Activated B cell treated with CpG ODN at 0.5 μM for 24 hours (primary cell): ENCODE measurements at regions of chr5 and their contacts with region 1.

Region 1: DNA sequence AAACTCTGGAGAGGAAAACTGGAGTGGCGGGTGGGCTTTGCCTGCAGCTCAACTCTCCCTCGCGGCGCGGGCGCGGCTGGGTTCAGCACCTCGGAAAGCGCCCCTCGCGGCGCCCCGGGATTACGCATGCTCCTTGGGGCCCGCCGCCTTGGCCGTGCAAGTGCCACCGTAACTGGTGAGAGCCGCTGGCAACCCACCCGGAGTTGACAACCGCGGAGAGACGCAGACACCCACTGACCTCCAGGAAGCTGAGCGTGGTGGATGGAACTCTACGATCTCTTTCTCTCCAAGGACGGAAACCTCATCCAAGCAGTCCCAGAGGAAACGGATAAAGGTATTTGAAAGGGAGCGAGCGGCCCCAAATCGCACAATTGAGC is 194 bp upstream of the RXFP3 start:
- DNase-seq: peak; percentile 31
- ATAC-seq: no peak
- H3K4me3 Mint-ChIP-seq: no peak overlapping the region
- H3K27ac Mint-ChIP-seq: no peak overlapping the region
- H3K4me1 Mint-ChIP-seq: peaks cover 17% of the 10 kb centered on the region
- H3K27me3 Mint-ChIP-seq: peaks cover 43% of the 10 kb centered on the region
- CTCF ChIP-seq: no peak

Region 2: DNA sequence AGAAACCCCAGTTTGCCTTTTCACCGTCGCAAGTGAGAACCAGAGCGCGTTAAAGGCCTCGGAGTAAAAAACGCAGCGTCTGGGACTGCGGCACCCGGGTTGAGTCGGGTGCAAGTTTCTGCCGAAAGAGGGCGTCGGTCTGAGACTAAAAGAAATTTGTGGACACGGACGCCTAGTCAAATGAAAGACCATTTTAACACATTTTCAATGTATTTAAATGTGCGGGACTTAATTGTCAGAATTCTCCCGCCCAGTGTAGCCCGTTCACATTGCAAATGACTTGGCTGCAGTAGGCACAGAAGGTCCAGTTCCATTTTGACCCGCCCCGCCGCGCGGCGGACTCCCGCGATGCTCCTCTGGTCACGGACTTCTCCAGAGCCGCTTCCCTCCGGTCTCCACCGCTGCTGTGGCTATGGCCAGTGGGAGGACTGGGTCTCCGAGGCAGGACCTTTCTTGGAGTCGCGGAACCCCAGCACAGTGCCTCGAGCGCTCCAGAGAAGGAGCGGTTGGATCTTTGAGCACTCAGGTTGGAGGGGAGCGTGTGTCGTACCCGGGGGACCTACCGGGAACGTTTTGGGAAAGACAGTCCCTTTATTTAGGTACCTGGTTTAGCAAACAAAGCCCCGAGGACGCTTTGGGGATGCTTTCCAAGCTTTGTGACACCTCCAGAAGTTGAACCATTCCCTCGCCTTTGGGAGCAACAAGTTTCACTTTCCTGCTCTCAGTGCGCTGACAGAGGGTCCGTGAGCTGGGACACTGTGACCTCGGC is 1226.0 kb before region 1 on chr5:
- CTCF ChIA-PET with region 1: no interaction called
- POLR2A ChIA-PET with region 1: no interaction called
- intact Hi-C with region 1: loop called (anchors 5 kb)
- DNase-seq: no peak
- ATAC-seq: no peak
- H3K4me3 Mint-ChIP-seq: peak overlapping the region; percentile 78
- H3K27ac Mint-ChIP-seq: no peak overlapping the region
- H3K4me1 Mint-ChIP-seq: peaks cover 35% of the 10 kb centered on the region
- H3K27me3 Mint-ChIP-seq: peaks cover 45% of the 10 kb centered on the region
- CTCF ChIP-seq: no peak

Region 3: DNA sequence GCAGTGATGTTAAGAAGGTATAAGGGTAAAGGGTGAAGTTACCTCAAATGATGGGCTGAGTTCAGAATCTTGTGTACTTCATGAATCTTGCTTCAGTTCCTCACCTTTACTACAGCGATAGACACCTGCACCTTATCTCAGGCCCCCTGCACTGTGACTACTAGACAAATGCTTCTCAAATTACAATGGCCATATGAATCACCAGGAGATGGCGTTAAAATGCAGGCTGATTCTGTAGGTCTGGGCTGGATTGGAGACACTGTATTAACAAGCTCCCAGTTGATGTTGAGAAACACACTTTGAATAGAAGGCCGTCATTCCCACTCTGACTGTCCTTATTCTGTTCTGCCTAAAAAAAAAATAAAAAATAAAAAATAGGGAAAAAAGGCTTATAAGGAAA is 465.4 kb before region 1 on chr5:
- CTCF ChIA-PET with region 1: interaction called, 8 read pairs
- POLR2A ChIA-PET with region 1: no interaction called
- intact Hi-C with region 1: loop called (anchors 1 kb)
- DNase-seq: no peak
- ATAC-seq: no peak
- H3K4me3 Mint-ChIP-seq: no peak overlapping the region
- H3K27ac Mint-ChIP-seq: no peak overlapping the region
- H3K4me1 Mint-ChIP-seq: peaks cover 5% of the 10 kb centered on the region
- H3K27me3 Mint-ChIP-seq: no peaks in the 10 kb centered on the region
- CTCF ChIP-seq: no peak

Region 4: GRCh38 chr5:33588654-33589372 is 347.2 kb before region 1 on chr5:
- CTCF ChIA-PET with region 1: interaction called, 24 read pairs
- POLR2A ChIA-PET with region 1: no interaction called
- intact Hi-C with region 1: loop called (anchors 1 kb)
- DNase-seq: no peak
- ATAC-seq: no peak
- H3K4me3 Mint-ChIP-seq: no peak overlapping the region
- H3K27ac Mint-ChIP-seq: no peak overlapping the region
- H3K4me1 Mint-ChIP-seq: no peaks in the 10 kb centered on the region
- H3K27me3 Mint-ChIP-seq: no peaks in the 10 kb centered on the region
- CTCF ChIP-seq: no peak

Region 5: DNA sequence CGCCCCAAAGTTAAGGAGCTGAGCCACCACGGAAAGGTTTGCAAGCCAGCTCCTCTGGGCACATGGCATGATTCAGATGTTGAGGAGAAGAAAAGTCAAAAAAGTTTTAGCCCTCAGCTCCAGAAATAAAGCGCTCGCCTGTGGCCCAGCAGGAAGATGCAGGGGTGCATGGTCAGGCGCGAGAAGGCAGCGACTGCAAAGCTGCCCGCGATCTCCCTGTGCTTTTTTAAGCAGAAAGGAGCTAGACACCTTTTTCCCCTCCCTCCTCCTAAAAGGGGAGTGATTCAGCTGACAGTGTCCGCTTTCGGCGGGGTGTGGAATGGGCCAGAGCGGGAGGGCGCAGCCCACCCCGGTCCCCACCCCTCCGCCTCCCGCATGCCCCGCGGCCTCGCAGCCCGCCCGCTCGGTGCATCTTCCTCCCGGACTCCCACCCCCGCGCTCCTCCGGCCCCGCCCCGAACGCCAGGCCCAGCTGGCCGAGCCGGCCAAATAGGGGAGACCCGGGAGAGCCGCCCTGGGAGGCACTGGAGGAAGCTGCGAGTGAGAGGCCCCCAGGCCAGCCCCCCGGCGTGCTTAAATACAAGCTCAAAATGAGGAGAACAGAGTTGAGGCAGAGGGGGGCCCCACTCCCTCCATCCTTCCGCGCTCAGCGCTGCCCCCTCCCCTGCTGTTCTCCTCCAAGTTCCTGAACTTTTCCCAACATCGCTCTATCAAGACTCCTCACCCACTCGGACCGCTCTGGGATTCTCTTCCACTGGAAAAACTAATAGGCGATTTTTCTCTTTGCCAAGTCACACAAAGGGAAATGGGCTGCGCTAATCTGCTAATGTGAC is 44.0 kb before region 1 on chr5 and contains the start of gene ADAMTS12:
- CTCF ChIA-PET with region 1: no interaction called
- POLR2A ChIA-PET with region 1: no interaction called
- intact Hi-C with region 1: no loop called
- DNase-seq: no peak
- ATAC-seq: no peak
- H3K4me3 Mint-ChIP-seq: no peak within 1 kb of the TSS
- H3K27ac Mint-ChIP-seq: no peak within 1 kb of the TSS
- H3K4me1 Mint-ChIP-seq: peaks cover 5% of the 10 kb centered on the region
- H3K27me3 Mint-ChIP-seq: peaks cover 52% of the 10 kb centered on the region
- CTCF ChIP-seq: no peak
- total RNA-seq, gene ADAMTS12: not detected in 2 replicates

Region 6: DNA sequence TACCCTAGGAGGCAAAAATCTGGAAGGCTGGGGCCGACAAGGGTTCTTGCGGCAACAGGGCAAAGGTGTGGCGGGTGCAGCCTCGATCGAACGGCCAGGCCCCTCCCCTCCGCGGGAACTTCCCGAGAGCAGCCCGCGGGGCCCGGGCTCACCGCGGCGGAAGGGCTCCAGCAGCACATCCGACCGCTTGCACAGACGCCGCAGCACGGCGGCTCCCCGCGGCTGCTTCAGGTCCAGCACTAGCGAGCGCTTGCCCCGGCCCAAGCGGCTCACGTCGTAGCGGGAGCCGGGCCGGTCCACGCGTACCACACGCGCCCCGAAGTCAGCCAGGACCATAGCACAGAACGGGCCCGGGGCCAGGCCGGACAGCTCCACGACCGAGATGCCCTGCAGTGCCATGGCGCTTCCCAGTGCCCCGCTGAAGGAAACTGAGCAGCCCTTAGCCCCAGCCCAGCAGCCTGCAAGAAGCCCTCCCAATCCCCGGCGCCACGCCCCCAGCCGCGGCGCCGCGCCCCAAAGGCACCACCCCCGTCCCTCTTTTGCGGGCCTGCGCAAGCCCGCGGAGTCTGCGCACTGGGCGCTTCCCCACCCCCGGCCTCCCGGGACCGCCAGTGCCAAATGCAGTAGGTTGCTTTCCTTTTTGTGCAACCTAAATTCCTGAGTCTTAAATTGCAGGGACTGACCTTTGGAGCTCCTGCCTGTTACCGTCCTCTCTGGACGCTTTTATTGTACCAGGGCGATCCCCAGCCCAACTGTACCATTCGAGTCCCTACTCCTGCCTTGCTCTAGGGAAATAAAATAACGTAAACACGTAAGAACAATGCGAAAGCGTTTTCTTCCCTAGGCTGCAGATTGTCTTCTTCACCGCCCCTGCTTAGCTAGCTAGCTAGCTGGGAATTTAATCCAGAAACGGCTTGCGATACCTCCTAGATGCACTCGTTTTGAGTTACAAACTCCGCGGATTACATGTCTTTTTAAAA is 71.9 kb after region 1 on chr5 and contains the start of gene AMACR:
- CTCF ChIA-PET with region 1: no interaction called
- POLR2A ChIA-PET with region 1: no interaction called
- intact Hi-C with region 1: loop called (anchors 2 kb)
- DNase-seq: peak; percentile 90
- ATAC-seq: peak; percentile 92
- H3K4me3 Mint-ChIP-seq: peak within 1 kb of the TSS; percentile 95
- H3K27ac Mint-ChIP-seq: peak within 1 kb of the TSS; percentile 91
- H3K4me1 Mint-ChIP-seq: peaks cover 23% of the 10 kb centered on the region
- H3K27me3 Mint-ChIP-seq: no peaks in the 10 kb centered on the region
- CTCF ChIP-seq: no peak
- total RNA-seq, gene AMACR: 6.0 and 6.5 TPM in 2 replicates